Heart left ventricle (tissue), 16 donors: ENCODE measurements at regions of chr12 and their contacts with region 1.

Region 1: GRCh38 chr12:120571299-120571698 is 9.9 kb downstream of the POP5 start:
- DNase-seq: no peak
- ATAC-seq: peak in 1 of 4 donors; percentile 12
- H3K4me3 ChIP-seq: no peak overlapping the region
- H3K27ac ChIP-seq: no peak overlapping the region
- H3K4me1 ChIP-seq: peaks cover 0 to 22% (median 6%) of the 10 kb centered on the region in 12 donors
- H3K27me3 ChIP-seq: no peaks in the 10 kb centered on the region
- CTCF ChIP-seq: no peak
- POLR2A ChIP-seq: no peak

Region 2: DNA sequence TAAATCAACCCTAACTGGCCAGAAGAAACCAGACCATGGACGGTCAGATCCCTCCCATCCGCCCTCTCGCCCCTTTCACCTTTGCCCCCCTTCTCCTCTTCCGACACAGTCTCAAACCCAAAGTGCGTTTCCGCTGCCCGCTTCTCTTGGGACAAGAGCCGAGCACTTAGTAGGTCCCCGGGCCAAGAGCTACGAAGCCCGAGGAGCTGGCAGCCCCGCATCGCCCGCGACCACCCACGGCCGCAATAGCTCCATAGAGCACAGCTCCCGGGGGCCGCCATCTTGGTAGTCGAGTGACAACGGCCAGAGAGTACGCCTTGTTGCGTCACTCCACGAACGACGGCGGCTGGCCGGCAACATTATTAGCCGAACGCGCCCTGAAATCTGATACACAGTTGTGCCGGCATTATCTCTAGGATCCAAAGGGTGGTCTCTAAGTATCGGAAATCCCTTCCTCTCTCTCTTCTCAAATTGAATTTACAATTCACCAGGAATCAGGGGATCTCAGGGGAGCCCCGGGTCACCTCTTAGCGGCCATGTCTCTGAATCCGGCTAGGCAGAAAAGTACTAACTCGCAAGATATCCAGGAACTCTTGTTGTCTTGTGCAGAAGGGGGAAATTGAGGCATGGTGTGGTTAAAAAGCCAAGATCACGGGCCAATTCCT is 42.3 kb before region 1 on chr12 and contains the start of gene COQ5:
- intact Hi-C with region 1: loop called in 1 of 10 experiments (anchors 10 kb)
- DNase-seq: peak; percentile 90 to 94 (median 93)
- ATAC-seq: peak; percentile 91 to 98 (median 96)
- H3K4me3 ChIP-seq: peak within 1 kb of the TSS; percentile 50 to 96 (median 71)
- H3K27ac ChIP-seq: peak within 1 kb of the TSS; percentile 77 to 97 (median 92)
- H3K4me1 ChIP-seq: peaks cover 0 to 18% (median 5%) of the 10 kb centered on the region in 12 donors
- H3K27me3 ChIP-seq: no peaks in the 10 kb centered on the region
- CTCF ChIP-seq: no peak
- POLR2A ChIP-seq: peak in 1 of 2 donors; percentile 40
- total RNA-seq, gene COQ5: 27.9 to 46.5 (median 36.7) TPM

Region 3: GRCh38 chr12:120540445-120540844 is 30.9 kb before region 1 on chr12:
- intact Hi-C with region 1: loop called in 1 of 10 experiments (anchors 1 kb)
- DNase-seq: no peak
- ATAC-seq: peak in 2 of 4 donors; percentile 7 to 39
- H3K4me3 ChIP-seq: no peak overlapping the region
- H3K27ac ChIP-seq: peak overlapping the region in 11 of 12 donors; percentile 74 to 98 (median 96)
- H3K4me1 ChIP-seq: peaks cover 28 to 96% (median 88%) of the 10 kb centered on the region in 12 donors
- H3K27me3 ChIP-seq: no peaks in the 10 kb centered on the region
- CTCF ChIP-seq: no peak
- POLR2A ChIP-seq: no peak

Region 4: DNA sequence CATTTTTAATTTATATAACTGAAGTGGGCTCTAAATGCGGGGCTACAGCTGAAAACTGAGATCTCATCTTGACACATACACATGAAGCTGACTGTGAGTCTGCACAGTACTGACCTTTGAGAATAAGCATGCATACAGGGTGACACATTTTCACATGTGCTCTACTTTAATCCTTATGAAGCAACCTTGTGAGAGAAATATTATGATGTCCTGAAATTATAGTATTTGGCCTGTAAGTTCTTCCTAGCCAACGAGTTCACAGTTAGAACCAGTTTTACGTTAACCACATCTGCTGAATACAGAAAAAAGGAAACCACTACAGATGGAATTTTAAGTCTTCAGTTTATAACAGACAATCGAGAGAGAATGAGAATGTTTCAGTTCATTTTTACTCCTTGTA is 262.6 kb after region 1 on chr12:
- intact Hi-C with region 1: no loop called
- DNase-seq: no peak
- ATAC-seq: peak in 2 of 4 donors; percentile 53 to 57
- H3K4me3 ChIP-seq: no peak overlapping the region
- H3K27ac ChIP-seq: peak overlapping the region in 4 of 12 donors; percentile 15 to 49 (median 38)
- H3K4me1 ChIP-seq: peaks cover 0 to 84% (median 55%) of the 10 kb centered on the region in 12 donors
- H3K27me3 ChIP-seq: no peaks in the 10 kb centered on the region
- CTCF ChIP-seq: no peak
- POLR2A ChIP-seq: no peak